Activated naive CD4-positive, alpha-beta T cell treated with anti-CD3 and anti-CD28 coated beads for 36 hours (primary cell): ENCODE measurements at regions of chr17 and their contacts with region 1.

Region 1: DNA sequence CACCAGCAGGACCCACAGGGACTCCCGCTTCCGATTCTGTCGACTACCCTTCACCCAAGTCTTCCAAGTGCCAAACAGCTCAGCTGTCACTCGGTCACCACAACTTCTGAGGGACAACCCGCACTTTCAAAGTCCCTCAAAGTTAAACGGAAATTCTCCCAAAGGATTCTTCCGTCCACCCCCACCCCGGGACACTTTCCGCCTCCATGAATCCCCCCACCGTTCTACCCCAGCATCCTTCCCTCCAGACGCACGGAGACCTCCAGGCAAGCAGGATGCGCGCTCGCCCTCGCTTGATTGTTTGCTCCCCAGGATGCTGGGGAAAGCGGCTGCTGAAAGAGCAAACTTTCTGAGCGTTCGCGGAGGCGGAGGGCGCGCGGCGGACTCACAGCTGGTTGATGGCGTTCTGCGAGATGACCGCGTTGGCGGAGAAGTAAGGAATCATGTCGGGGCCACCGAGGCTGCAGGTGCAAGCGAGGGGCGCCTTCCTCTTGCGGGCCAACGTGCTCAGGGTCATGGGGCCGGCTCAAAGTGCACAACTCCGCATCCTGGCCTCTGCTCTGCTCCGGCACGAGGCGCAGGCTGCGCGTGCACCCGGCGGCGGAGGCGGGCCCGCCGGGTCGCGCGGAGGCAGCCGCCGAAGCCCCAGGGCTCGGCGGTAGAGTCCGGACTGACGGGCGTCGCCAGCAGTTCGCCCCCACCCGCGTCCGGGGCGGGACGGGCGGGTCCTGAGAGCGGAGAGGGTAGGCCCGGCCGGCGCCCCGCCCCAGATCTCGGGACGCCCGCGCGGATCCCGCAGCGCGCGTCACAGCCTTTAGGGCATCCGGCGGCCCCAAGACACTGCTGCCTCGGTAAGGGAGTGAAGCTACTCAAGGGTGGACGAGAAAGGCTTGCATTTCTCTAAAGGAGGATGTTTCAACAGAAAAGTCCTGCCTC is 138.3 kb upstream of the CORO6 start:
- DNase-seq: peak; percentile 95
- H3K4me3 Mint-ChIP-seq: peak overlapping the region; percentile 90
- H3K27ac Mint-ChIP-seq: peak overlapping the region; percentile 94
- H3K4me1 Mint-ChIP-seq: peaks cover 32% of the 10 kb centered on the region
- H3K27me3 Mint-ChIP-seq: no peaks in the 10 kb centered on the region

Region 2: DNA sequence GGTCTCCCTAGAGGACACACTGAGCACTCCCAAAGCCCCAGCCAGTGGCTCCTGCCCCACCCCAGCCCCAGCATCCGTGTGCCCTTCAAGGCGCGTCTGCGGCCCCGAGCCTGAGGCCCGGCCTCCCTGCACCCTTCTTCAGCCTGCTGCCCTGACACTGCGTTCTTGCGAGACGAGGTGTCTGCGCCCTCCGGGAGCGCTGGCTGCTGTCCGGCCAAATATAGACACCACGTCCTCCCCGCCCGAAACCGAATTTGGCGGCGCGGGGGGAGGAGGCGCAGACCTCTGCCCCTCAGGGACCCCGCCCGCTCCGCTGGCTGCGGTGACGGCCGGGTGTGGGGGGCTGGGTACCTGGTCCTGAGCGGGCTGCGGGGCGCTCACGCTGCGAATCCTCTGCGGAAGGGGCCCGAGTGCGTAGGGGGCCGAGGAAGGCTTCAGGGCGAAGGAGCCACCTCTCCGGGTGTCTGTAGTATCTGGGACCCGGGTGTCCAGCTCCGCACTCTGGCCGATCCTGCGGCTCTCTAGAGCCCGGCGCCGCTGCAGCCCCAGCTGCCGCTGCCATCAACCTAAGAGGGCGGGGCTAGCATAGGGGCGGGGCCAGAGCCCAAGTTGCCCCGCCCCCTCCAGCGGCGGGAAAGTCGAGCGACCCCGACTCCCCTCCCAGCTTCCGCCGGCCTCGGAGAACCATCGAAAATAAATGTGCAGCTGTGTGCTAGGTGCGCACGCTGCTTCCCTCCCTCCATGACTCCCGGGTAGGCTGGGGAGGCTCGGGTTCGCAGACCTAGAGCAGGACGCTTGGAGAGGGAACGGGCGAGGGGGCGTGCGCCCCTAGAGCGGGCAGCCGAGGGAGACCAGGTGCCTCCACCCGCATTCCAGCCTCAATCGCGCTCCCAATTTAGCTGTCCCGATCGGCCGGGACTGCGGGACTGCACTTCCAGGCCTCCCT is 138.4 kb before region 1 on chr17 and contains the start of gene CORO6:
- CTCF ChIA-PET with region 1: interaction called, 7 read pairs
- intact Hi-C with region 1: loop called (anchors 1 kb)
- DNase-seq: peak; percentile 75
- H3K4me3 Mint-ChIP-seq: peak within 1 kb of the TSS; percentile 79
- H3K27ac Mint-ChIP-seq: peak within 1 kb of the TSS; percentile 96
- H3K4me1 Mint-ChIP-seq: peaks cover 57% of the 10 kb centered on the region
- H3K27me3 Mint-ChIP-seq: no peaks in the 10 kb centered on the region
- total RNA-seq, gene CORO6: 24.8 to 27.3 TPM

Region 3: GRCh38 chr17:29664743-29665480 is 96.1 kb before region 1 on chr17:
- CTCF ChIA-PET with region 1: interaction called, 4 read pairs
- intact Hi-C with region 1: loop called (anchors 1 kb)
- DNase-seq: peak; percentile 32
- H3K4me3 Mint-ChIP-seq: no peak overlapping the region
- H3K27ac Mint-ChIP-seq: peak overlapping the region; percentile 90
- H3K4me1 Mint-ChIP-seq: peaks cover 54% of the 10 kb centered on the region
- H3K27me3 Mint-ChIP-seq: no peaks in the 10 kb centered on the region

Region 4: GRCh38 chr17:29705386-29705785 is 55.6 kb before region 1 on chr17:
- CTCF ChIA-PET with region 1: interaction called, 3 read pairs
- intact Hi-C with region 1: loop called (anchors 1 kb)
- DNase-seq: no peak
- H3K4me3 Mint-ChIP-seq: peak overlapping the region; percentile 55
- H3K27ac Mint-ChIP-seq: peak overlapping the region; percentile 96
- H3K4me1 Mint-ChIP-seq: peaks cover 46% of the 10 kb centered on the region
- H3K27me3 Mint-ChIP-seq: no peaks in the 10 kb centered on the region

Region 5: GRCh38 chr17:29740017-29740416 is 21.0 kb before region 1 on chr17:
- CTCF ChIA-PET with region 1: no interaction called
- intact Hi-C with region 1: loop called (anchors 2 kb)
- DNase-seq: no peak
- H3K4me3 Mint-ChIP-seq: no peak overlapping the region
- H3K27ac Mint-ChIP-seq: peak overlapping the region; percentile 2
- H3K4me1 Mint-ChIP-seq: peaks cover 56% of the 10 kb centered on the region
- H3K27me3 Mint-ChIP-seq: no peaks in the 10 kb centered on the region

Region 6: GRCh38 chr17:29807520-29808351 is 46.7 kb after region 1 on chr17:
- CTCF ChIA-PET with region 1: no interaction called
- intact Hi-C with region 1: no loop called
- DNase-seq: peak; percentile 87
- H3K4me3 Mint-ChIP-seq: no peak overlapping the region
- H3K27ac Mint-ChIP-seq: no peak overlapping the region
- H3K4me1 Mint-ChIP-seq: peaks cover 14% of the 10 kb centered on the region
- H3K27me3 Mint-ChIP-seq: no peaks in the 10 kb centered on the region